Lower lobe of right lung (tissue), 2 donors: ENCODE measurements at regions of chr2 and their contacts with region 1.

Region 1: GRCh38 chr2:68467077-68467960 is at the starts of genes APLF and FBXO48:
- DNase-seq: peak; percentile 99
- ATAC-seq: peak; percentile 99
- H3K4me3 ChIP-seq: peak within 1 kb of the TSS; percentile 85
- H3K27ac ChIP-seq: peak within 1 kb of the TSS; percentile 88
- H3K4me1 ChIP-seq: peaks cover 20% of the 10 kb centered on the region
- H3K27me3 ChIP-seq: no peaks in the 10 kb centered on the region
- CTCF ChIP-seq: no peak
- total RNA-seq, gene APLF: 5.8 TPM
- total RNA-seq, gene FBXO48: 2.3 TPM

Region 2: DNA sequence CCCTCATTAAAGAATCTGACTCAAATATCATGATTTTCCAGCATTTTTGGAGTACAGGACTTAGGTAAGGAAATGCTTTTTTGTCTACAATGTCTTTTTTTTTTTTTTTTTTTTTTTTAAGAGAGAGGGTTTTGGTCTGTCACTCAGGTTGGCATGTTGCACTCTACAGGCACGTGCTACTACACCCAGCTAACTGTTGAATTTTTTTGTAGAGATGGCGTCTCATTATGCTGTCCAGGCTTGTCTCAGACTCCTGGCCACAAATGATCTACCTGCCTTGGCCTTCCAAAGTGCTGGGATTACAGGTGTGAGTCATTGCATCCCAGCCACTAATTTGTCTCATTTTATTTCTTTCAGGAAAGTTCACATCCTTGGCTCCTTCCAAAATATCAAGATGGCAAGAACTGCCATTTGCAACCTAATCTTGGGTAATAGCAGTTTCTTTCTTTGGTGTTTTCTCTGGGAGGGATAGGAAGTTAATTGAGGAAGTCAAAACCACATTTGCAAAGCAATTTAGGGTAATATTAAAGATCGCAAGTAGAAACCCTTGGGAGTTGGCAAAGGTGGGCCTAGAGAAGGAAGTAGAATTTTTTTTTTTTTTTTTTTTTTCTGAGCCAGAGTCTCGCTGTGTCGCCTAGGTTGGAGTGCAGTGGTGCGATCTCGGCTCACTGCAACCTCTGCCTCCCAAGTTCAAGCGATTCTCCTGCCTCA is 294.2 kb before region 1 on chr2:
- intact Hi-C with region 1: no loop called
- DNase-seq: no peak
- ATAC-seq: peak; percentile 48 to 51
- H3K4me3 ChIP-seq: no peak overlapping the region
- H3K27ac ChIP-seq: no peak overlapping the region
- H3K4me1 ChIP-seq: no peaks in the 10 kb centered on the region
- H3K27me3 ChIP-seq: no peaks in the 10 kb centered on the region
- CTCF ChIP-seq: no peak

Region 3: GRCh38 chr2:68238955-68239822 is 228.1 kb before region 1 on chr2:
- intact Hi-C with region 1: no loop called
- DNase-seq: no peak
- ATAC-seq: no peak
- H3K4me3 ChIP-seq: no peak overlapping the region
- H3K27ac ChIP-seq: no peak overlapping the region
- H3K4me1 ChIP-seq: peaks cover 94% of the 10 kb centered on the region
- H3K27me3 ChIP-seq: no peaks in the 10 kb centered on the region
- CTCF ChIP-seq: no peak

Region 4: DNA sequence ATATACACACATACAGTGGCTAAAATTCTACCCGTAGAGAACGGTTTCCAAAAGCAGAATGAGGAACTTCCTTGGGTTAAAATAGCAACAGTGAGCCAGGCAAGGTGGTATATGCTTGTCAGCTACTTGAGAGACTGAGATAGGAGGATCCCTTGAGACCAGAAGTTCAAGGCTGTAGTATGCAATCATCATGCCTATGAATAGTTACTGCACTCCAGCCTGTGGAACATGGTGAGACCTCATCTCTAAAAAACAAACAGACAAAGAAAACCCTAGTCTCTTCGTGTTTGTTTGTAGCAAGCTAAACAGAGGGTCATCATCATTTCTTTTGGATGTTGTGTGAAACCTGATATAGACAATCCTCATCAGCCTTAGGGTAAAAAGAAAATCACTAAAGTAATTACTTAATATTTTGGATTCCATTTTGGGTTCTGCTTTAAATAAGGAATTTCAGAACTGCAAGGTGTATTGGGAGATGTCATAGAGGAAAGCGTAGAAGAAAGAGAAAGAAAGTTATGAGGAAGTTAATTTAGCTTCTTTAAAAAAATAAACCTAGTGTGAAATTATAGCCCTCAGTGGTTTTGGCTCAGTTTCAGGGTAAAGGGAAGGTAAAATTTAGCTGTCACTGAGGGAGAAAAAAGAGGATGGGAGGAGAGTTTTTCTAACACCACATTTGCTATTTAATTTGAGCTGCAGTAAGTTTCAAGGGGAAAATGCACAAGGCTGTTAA is 55.8 kb before region 1 on chr2:
- intact Hi-C with region 1: no loop called
- DNase-seq: no peak
- ATAC-seq: no peak
- H3K4me3 ChIP-seq: no peak overlapping the region
- H3K27ac ChIP-seq: no peak overlapping the region
- H3K4me1 ChIP-seq: peaks cover 13% of the 10 kb centered on the region
- H3K27me3 ChIP-seq: no peaks in the 10 kb centered on the region
- CTCF ChIP-seq: no peak

Region 5: GRCh38 chr2:68594674-68595492 is 127.6 kb after region 1 on chr2:
- intact Hi-C with region 1: loop called (anchors 10 kb)
- DNase-seq: peak; percentile 49
- ATAC-seq: peak; percentile 75 to 76
- H3K4me3 ChIP-seq: no peak overlapping the region
- H3K27ac ChIP-seq: no peak overlapping the region
- H3K4me1 ChIP-seq: peaks cover 5% of the 10 kb centered on the region
- H3K27me3 ChIP-seq: no peaks in the 10 kb centered on the region
- CTCF ChIP-seq: peak; percentile 86